Psoas muscle (tissue), 8 donors: ENCODE measurements at regions of chr1 and their contacts with region 1.

Region 1: DNA sequence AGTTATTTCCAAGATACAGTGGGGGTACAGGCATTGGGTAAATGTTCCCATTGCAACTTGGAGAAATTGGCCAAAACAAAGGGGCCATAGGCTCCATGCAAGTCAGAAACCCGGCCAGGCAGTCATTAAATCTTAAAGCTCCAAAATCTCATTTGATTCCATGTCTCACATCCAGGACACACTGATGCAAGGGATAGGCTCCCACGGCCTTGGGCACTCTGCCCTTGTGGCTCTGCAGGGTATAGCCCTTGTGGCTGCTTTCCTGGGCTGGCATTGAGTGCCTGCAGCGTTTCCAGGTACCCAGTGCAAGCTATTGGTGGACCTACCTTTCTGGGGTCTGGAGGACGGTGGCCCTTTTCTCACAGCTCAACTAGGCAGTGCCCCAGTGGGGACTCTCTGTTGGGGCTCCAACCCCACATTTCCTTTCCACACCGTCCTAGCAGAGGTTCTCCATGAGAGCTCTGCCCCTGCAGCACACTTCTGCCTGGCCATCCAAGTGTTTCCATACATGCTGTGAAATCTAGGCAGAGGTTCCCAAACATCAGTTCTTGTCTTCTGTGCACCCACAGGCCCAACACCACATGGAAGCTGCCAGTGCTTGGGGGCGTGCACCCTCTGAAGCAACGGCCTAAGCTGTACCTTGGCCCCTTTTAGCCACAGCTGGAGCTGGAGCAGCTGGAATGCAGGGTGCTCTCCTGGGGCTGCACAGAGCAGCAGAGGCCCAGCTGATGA is 67.2 kb downstream of the HS2ST1 start:
- DNase-seq: no peak
- ATAC-seq: no peak
- H3K4me3 ChIP-seq: no peak overlapping the region
- H3K27ac ChIP-seq: no peak overlapping the region
- H3K4me1 ChIP-seq: no peaks in the 10 kb centered on the region
- H3K27me3 ChIP-seq: no peaks in the 10 kb centered on the region
- CTCF ChIP-seq: no peak

Region 2: GRCh38 chr1:86833461-86834215 is 148.0 kb before region 1 on chr1:
- intact Hi-C with region 1: no loop called
- DNase-seq: peak; percentile 61 to 70
- ATAC-seq: peak; percentile 87 to 98 (median 91)
- H3K4me3 ChIP-seq: no peak overlapping the region
- H3K27ac ChIP-seq: no peak overlapping the region
- H3K4me1 ChIP-seq: no peaks in the 10 kb centered on the region
- H3K27me3 ChIP-seq: no peaks in the 10 kb centered on the region
- CTCF ChIP-seq: peak; percentile 70

Region 3: GRCh38 chr1:87017998-87018672 is 36.5 kb after region 1 on chr1:
- intact Hi-C with region 1: loop called in 1 of 2 experiments (anchors 5 kb)
- DNase-seq: no peak
- ATAC-seq: no peak
- H3K4me3 ChIP-seq: no peak overlapping the region
- H3K27ac ChIP-seq: no peak overlapping the region
- H3K4me1 ChIP-seq: no peaks in the 10 kb centered on the region
- H3K27me3 ChIP-seq: no peaks in the 10 kb centered on the region
- CTCF ChIP-seq: no peak